Dorsolateral prefrontal cortex (tissue), 120 donors: ENCODE measurements at regions of chr20 and their contacts with region 1.

Region 1: DNA sequence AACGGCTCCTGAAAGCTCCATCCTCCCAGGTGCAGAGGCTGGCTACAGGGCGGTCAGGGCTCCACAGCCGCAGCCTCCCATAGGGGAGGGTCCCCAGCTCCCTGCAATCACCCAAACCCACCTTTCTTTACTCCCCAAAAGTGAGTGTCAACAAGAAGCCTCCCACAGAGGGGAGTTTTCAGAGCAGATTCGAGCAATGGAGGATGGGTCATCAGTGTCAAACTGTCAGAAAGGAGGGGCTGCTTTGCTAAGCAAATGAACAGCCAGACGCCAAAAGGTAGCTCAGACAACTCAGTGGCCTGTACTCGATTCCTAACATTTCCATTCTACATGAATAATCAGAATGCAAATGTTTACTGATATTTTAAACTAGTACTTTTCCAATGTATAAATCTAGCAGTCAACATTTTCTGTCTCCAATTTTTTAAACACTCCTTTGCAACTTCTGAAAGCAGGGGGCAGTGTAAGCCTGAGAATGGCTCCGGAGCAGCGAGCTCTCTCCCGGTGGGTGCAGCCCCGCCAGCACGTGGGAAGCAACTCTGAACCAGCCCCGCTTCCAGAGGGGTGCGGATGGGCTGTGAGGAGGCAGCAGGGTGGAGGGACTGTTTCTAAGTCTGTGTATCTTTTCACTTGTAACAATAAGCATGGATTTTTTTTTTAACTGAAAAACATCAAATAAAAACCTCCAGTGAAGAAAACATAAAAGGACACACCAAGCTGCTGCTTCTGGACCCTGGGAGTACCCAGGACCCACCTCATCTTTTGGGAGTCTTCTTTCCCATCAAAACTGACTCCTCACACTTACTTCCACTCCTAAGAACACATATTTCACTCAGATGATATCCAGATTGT is 54.9 kb downstream of the TAF4 start:
- DNase-seq: peak in 8 of 10 donors; percentile 48 to 69 (median 65)
- H3K4me3 ChIP-seq: peak overlapping the region in 1 of 59 donors; percentile 8
- H3K27ac ChIP-seq: no peak overlapping the region
- H3K27me3 ChIP-seq: no peaks in the 10 kb centered on the region
- CTCF ChIP-seq: peak; percentile 44 to 88 (median 76)

Region 2: DNA sequence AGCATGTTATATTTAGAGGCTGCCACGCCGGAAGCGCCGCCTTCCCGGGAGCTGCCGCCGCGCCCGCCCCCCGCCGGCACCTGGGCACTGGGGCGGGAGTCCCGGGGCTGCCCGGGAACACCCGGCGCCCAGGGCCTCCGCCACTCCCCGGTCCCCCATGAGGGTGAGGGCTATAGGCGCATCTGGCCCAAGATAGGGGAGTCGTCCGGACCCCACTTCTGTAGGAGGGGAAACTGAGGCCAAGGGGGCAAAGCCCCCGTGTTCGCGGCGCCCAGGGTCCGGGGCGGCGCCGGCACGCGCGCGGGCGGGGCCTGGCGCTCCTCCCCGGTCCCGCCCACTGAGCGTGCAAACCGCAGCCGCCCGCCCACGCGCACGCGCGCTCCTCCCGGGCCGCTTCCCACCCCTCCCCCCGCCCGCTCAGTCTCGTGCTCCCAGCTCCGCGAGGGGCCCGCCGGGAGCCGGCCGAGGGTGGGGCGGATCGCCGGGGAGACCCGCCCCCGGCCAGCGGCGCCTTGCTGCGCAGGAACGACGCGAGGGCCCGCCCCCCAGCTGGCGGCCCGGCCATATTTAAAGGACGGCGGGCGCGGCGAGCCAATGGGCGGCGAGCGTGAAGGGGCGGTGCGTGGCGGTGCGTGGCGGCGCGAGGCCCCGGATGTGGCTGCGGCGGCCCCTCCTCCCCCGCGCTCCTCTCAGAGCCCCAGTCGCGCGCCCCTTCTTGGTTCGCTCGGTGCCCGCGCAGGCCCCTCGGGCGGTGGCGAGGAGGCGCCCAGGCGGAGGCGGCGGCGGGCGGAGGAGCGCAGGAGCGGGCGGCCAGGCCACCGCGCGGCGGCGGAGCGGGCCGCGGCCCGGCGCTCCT is 111.2 kb after region 1 on chr20 and contains the start of gene LSM14B:
- intact Hi-C with region 1: loop called in 1 of 2 experiments (anchors 5 kb)
- DNase-seq: peak; percentile 82 to 97 (median 92)
- H3K4me3 ChIP-seq: peak within 1 kb of the TSS; percentile 61 to 97 (median 84)
- H3K27ac ChIP-seq: peak within 1 kb of the TSS; percentile 13 to 98 (median 93)
- H3K27me3 ChIP-seq: peaks cover 0 to 9% (median 0%) of the 10 kb centered on the region in 45 donors
- CTCF ChIP-seq: peak in 6 of 56 donors; percentile 7 to 29 (median 12)
- total RNA-seq, gene LSM14B: 50.8 to 92.9 (median 73.1) TPM

Region 3: GRCh38 chr20:62136283-62137091 is 125.7 kb after region 1 on chr20:
- intact Hi-C with region 1: loop called (anchors 5 kb)
- DNase-seq: peak in 8 of 10 donors; percentile 56 to 77 (median 70)
- H3K4me3 ChIP-seq: no peak overlapping the region
- H3K27ac ChIP-seq: peak overlapping the region in 1 of 59 donors; percentile 63
- H3K27me3 ChIP-seq: no peaks in the 10 kb centered on the region
- CTCF ChIP-seq: peak; percentile 56 to 82 (median 71)

Region 4: GRCh38 chr20:62143118-62143973 is 132.6 kb after region 1 on chr20 and contains the starts of genes PSMA7 and SS18L1:
- intact Hi-C with region 1: loop called (anchors 5 kb)
- DNase-seq: peak; percentile 66 to 93 (median 84)
- H3K4me3 ChIP-seq: peak within 1 kb of the TSS; percentile 61 to 98 (median 86)
- H3K27ac ChIP-seq: peak within 1 kb of the TSS in 58 of 59 donors; percentile 57 to 100 (median 94)
- H3K27me3 ChIP-seq: no peaks in the 10 kb centered on the region
- CTCF ChIP-seq: peak in 3 of 56 donors; percentile 12 to 29 (median 13)
- total RNA-seq, gene PSMA7: 92.8 to 154 (median 124) TPM
- total RNA-seq, gene SS18L1: 23.7 to 55.2 (median 35.7) TPM